Activated B cell treated with CpG ODN at 0.5 μM for 24 hours (primary cell): ENCODE measurements at regions of chr19 and their contacts with region 1.

Region 1: GRCh38 chr19:53195265-53195903 is 2.2 kb upstream of the ZNF665 start:
- DNase-seq: peak; percentile 50
- ATAC-seq: peak; percentile 48
- H3K4me3 Mint-ChIP-seq: peak overlapping the region; percentile 39
- H3K27ac Mint-ChIP-seq: peak overlapping the region; percentile 30
- H3K4me1 Mint-ChIP-seq: peaks cover 41% of the 10 kb centered on the region
- H3K27me3 Mint-ChIP-seq: no peaks in the 10 kb centered on the region
- CTCF ChIP-seq: no peak

Region 2: DNA sequence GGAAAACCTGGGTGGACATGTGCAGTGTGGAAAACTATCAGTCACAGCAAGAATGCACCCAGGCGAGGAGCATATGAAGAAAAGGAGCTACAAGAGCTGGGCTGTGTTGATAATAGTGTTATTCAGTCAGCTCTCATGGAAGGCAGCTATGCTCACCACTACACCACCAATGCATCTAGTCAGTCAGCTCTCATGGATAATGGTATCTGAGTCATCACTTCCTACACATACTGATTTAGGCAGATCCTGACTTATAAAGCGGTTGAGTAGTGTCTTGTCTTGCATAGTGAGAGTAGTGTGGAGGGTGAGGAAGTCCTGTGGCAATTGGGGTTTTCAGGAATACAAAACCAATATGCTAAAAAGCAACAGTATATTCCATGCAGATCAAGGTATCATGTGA is 83.1 kb before region 1 on chr19:
- CTCF ChIA-PET with region 1: no interaction called
- POLR2A ChIA-PET with region 1: no interaction called
- intact Hi-C with region 1: no loop called
- DNase-seq: no peak
- ATAC-seq: no peak
- H3K4me3 Mint-ChIP-seq: no peak overlapping the region
- H3K27ac Mint-ChIP-seq: no peak overlapping the region
- H3K4me1 Mint-ChIP-seq: no peaks in the 10 kb centered on the region
- H3K27me3 Mint-ChIP-seq: no peaks in the 10 kb centered on the region
- CTCF ChIP-seq: no peak

Region 3: GRCh38 chr19:53158119-53158656 is 37.2 kb before region 1 on chr19:
- CTCF ChIA-PET with region 1: no interaction called
- POLR2A ChIA-PET with region 1: interaction called, 10 read pairs
- intact Hi-C with region 1: loop called (anchors 1 kb)
- DNase-seq: peak; percentile 32
- ATAC-seq: peak; percentile 16
- H3K4me3 Mint-ChIP-seq: peak overlapping the region; percentile 89
- H3K27ac Mint-ChIP-seq: peak overlapping the region; percentile 79
- H3K4me1 Mint-ChIP-seq: peaks cover 24% of the 10 kb centered on the region
- H3K27me3 Mint-ChIP-seq: no peaks in the 10 kb centered on the region
- CTCF ChIP-seq: no peak

Region 4: DNA sequence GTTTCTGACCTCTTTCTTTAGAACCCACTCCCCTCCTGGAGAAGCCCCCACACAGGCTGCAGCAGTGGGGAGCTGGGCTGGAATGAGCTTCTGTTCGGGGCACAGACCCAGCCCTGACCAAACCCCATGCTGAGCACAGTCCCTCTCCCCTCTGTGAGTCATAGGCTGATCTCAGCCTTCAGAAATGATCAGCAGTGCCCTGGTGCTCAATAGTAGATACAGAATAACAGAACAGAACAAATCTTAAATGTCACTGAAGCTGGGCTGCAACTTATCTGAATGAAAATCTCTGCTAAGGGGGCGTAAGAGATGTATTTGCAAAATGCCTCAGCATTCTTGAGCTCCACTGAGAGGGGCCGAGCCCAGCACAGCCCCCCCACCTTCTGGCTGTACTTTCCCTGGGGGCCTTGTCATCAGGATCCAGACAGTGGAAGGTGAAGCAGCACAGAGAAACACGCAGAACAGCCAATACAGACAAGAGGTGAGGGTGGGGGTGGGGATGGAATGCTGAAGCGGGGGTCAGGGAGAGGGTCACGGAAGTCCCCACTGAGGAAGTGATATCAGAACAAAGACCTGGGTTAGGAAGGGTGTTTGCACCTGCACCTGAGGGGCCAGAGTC is 12.1 kb before region 1 on chr19:
- CTCF ChIA-PET with region 1: no interaction called
- POLR2A ChIA-PET with region 1: no interaction called
- intact Hi-C with region 1: no loop called
- DNase-seq: no peak
- ATAC-seq: no peak
- H3K4me3 Mint-ChIP-seq: no peak overlapping the region
- H3K27ac Mint-ChIP-seq: no peak overlapping the region
- H3K4me1 Mint-ChIP-seq: peaks cover 10% of the 10 kb centered on the region
- H3K27me3 Mint-ChIP-seq: no peaks in the 10 kb centered on the region
- CTCF ChIP-seq: no peak

Region 5: DNA sequence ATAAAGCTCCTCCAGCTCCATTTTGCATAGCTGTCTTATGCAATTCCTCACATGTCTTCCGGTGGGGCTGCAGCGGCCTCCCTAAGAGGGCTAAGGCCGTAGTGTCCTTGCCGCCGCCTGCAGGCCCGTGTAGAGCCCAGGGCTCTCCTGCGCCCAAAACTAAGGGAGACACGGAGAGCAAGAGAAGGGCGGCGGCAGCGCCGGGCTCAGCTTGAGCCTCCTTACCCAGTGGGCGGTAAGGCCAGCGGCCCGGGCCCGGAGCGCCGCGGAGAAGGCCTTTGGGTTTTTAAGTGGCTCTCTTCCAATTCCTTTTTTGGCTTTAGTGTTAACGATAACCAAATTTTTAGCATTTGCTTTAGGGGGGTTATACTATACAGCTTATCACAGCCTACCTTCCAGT is 29.2 kb after region 1 on chr19:
- CTCF ChIA-PET with region 1: no interaction called
- POLR2A ChIA-PET with region 1: no interaction called
- intact Hi-C with region 1: no loop called
- DNase-seq: no peak
- ATAC-seq: no peak
- H3K4me3 Mint-ChIP-seq: no peak overlapping the region
- H3K27ac Mint-ChIP-seq: no peak overlapping the region
- H3K4me1 Mint-ChIP-seq: no peaks in the 10 kb centered on the region
- H3K27me3 Mint-ChIP-seq: no peaks in the 10 kb centered on the region
- CTCF ChIP-seq: no peak

Region 6: GRCh38 chr19:53333463-53334449 is 138.4 kb after region 1 on chr19 and contains the start of gene ZNF845:
- CTCF ChIA-PET with region 1: no interaction called
- POLR2A ChIA-PET with region 1: no interaction called
- intact Hi-C with region 1: loop called (anchors 1 kb)
- DNase-seq: peak; percentile 99
- ATAC-seq: peak; percentile 99
- H3K4me3 Mint-ChIP-seq: peak within 1 kb of the TSS; percentile 95
- H3K27ac Mint-ChIP-seq: peak within 1 kb of the TSS; percentile 91
- H3K4me1 Mint-ChIP-seq: peaks cover 30% of the 10 kb centered on the region
- H3K27me3 Mint-ChIP-seq: peaks cover 4% of the 10 kb centered on the region
- CTCF ChIP-seq: no peak
- total RNA-seq, gene ZNF845: 11.6 and 11.9 TPM in 2 replicates

Region 7: GRCh38 chr19:53394974-53395839 is 199.8 kb after region 1 on chr19 and contains the start of gene ZNF765:
- CTCF ChIA-PET with region 1: no interaction called
- POLR2A ChIA-PET with region 1: no interaction called
- intact Hi-C with region 1: loop called (anchors 1 kb)
- DNase-seq: peak; percentile 98
- ATAC-seq: peak; percentile 99
- H3K4me3 Mint-ChIP-seq: peak within 1 kb of the TSS; percentile 95
- H3K27ac Mint-ChIP-seq: peak within 1 kb of the TSS; percentile 90
- H3K4me1 Mint-ChIP-seq: peaks cover 29% of the 10 kb centered on the region
- H3K27me3 Mint-ChIP-seq: no peaks in the 10 kb centered on the region
- CTCF ChIP-seq: no peak
- total RNA-seq, gene ZNF765: 16.2 and 18.9 TPM in 2 replicates

Region 8: DNA sequence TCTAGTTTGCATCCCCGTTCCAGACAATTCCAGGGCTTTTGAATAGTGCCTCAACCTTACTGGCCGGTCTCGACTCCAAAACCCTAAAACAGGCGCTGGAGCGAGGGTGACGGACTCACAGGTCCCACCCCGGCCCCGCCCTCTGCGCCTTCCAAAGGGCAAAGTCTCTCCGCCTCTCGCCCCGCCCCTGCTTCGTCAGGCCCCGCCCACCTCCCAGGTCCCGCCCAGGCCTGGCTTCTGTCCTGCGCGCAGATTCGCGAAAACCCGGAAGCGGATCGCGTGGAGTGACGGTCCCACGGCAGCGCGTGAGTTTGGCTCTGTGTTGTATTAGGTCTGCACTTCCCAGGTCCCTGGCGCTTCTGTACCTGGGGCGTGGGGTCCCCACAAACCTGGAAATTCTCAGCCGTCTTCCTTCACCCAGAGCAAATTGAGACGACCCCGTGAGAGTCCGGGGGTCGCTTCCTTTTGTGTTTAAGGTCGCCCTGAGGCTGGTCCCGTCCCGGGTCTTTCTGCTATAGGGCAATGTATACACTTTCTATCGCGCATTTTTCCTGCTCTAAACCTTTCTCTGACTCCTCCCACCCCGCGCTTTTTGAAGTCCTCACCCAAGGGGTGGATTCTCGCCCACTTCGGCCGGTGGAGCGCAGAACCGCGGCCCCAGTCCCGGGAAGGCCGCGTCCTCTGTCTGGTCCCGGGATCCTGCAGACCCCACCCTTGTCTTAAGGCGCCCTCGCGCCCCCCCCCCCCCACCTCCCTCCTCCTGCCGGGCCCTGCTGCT is 272.3 kb after region 1 on chr19 and contains the start of gene ZNF813:
- CTCF ChIA-PET with region 1: no interaction called
- POLR2A ChIA-PET with region 1: no interaction called
- intact Hi-C with region 1: loop called (anchors 5 kb)
- DNase-seq: peak; percentile 97
- ATAC-seq: peak; percentile 99
- H3K4me3 Mint-ChIP-seq: peak within 1 kb of the TSS; percentile 94
- H3K27ac Mint-ChIP-seq: peak within 1 kb of the TSS; percentile 90
- H3K4me1 Mint-ChIP-seq: peaks cover 32% of the 10 kb centered on the region
- H3K27me3 Mint-ChIP-seq: peaks cover 18% of the 10 kb centered on the region
- CTCF ChIP-seq: no peak
- total RNA-seq, gene ZNF813: 8.2 and 10.7 TPM in 2 replicates

Region 9: GRCh38 chr19:54029930-54030490 is 834.6 kb after region 1 on chr19:
- CTCF ChIA-PET with region 1: no interaction called
- POLR2A ChIA-PET with region 1: no interaction called
- intact Hi-C with region 1: loop called (anchors 10 kb)
- DNase-seq: no peak
- ATAC-seq: no peak
- H3K4me3 Mint-ChIP-seq: no peak overlapping the region
- H3K27ac Mint-ChIP-seq: no peak overlapping the region
- H3K4me1 Mint-ChIP-seq: no peaks in the 10 kb centered on the region
- H3K27me3 Mint-ChIP-seq: peaks cover 9% of the 10 kb centered on the region
- CTCF ChIP-seq: no peak

Region 10: GRCh38 chr19:54231077-54231931 is 1035.9 kb after region 1 on chr19:
- CTCF ChIA-PET with region 1: no interaction called
- POLR2A ChIA-PET with region 1: no interaction called
- intact Hi-C with region 1: loop called (anchors 10 kb)
- DNase-seq: peak; percentile 73
- ATAC-seq: peak; percentile 96
- H3K4me3 Mint-ChIP-seq: no peak overlapping the region
- H3K27ac Mint-ChIP-seq: no peak overlapping the region
- H3K4me1 Mint-ChIP-seq: peaks cover 6% of the 10 kb centered on the region
- H3K27me3 Mint-ChIP-seq: peaks cover 44% of the 10 kb centered on the region
- CTCF ChIP-seq: no peak